ENCODE measurements at regions of chr15 and their contacts with region 1.

Region 1: DNA sequence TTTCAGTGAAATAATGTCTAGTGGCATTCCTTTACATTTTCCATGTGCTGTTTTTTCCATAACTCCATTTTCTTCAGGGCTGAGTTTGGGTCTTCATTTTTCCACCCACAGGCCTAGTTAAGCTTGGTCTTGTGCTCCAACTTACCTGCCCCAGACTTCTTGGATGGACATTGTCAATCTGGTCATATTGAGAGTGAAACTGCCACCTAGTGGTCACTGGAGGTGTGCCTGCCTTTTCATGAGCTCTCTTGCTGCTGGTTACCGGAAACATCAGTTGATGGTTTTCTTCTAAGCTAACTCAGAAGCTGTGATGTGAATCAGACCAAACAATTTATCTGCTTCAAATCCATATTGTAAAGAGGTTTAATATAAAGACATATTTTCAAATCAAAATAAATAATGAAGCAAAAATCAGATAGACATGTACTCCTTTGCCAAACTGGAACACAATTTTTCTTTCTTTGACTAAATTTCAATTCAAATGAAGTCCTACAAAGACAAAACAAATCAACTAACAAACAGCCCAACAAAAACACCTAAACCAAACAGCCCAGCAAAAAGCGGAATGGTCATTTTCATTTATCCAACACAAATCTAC is 135.1 kb upstream of the RASGRP1 start:
- DNase-seq: peak; percentile 87
- ATAC-seq: peak; percentile 34
- H3K4me3 Mint-ChIP-seq: peak overlapping the region; percentile 31
- H3K27ac Mint-ChIP-seq: peak overlapping the region; percentile 84
- H3K4me1 Mint-ChIP-seq: peaks cover 62% of the 10 kb centered on the region
- H3K27me3 Mint-ChIP-seq: no peaks in the 10 kb centered on the region

Region 2: DNA sequence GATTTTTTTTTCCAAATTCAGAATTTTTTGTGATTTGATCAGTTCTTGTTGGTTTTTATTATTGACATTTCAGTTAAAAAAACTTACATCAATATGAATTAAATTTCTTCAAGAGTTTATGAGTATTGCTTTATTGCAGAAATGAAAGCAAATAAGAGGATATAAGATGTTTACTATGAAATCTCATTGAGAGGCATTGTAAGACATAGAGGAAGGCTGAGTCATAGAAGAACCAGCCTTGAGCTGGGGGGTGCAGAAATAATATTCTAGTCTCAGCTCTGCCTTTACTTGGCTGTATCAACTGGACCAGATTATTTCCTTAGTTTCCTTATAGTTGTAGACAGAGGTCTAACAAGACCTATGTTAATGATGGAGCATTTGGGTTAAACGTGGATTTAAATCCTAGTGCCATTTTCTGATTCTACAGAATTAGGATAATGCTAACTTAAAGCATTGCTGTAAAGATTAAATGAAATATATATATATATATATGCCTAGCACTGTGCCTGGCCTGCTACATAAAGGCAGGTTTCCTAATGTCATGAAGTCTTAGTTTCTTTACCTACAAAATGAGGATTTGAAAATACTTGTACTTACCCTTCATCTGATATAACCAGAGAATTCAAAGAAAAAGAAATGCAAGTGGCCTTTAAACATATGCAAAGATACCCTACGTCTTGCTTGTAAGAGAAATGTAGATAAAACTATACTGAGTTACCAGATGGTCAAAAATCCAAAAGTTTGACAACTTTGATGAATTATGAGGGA is 238.5 kb before region 1 on chr15:
- CTCF ChIA-PET with region 1: interaction called, 14 read pairs
- POLR2A ChIA-PET with region 1: interaction called, 3 read pairs
- DNase-seq: no peak
- ATAC-seq: no peak
- H3K4me3 Mint-ChIP-seq: no peak overlapping the region
- H3K27ac Mint-ChIP-seq: no peak overlapping the region
- H3K4me1 Mint-ChIP-seq: peaks cover 26% of the 10 kb centered on the region
- H3K27me3 Mint-ChIP-seq: no peaks in the 10 kb centered on the region

Region 3: DNA sequence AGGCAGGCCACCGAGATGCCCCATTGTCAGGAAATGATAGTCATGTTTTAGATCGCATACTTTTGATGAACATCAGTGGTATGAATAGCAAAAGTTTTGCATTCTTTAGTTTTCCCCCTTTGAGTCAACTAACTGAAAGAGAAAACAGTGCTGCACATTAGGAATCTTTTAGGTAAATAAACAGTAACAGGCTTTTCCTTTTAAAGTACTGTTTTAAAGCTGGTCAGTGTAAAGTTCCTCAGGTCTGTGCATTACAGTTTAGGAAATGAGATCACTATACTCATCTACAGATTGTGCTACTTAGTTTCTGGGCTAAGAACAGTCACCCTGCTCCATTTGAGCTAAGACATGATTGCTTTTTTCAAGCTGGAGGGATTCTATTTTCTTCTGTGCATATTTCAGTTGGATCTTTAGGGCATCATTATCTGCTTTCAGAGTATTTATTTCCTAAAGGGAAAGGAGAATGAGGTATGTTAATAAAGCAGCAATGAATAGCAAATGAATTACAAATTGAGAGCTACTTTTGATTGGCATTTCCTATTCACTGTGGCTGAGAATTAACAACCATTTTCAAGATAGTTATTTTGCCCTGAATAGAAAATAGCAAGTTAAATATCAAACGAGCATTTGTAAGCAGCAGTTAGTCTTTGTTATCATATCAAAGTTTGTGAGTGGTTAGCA is 209.3 kb before region 1 on chr15:
- CTCF ChIA-PET with region 1: interaction called, 39 read pairs
- POLR2A ChIA-PET with region 1: no interaction called
- DNase-seq: no peak
- ATAC-seq: no peak
- H3K4me3 Mint-ChIP-seq: no peak overlapping the region
- H3K27ac Mint-ChIP-seq: peak overlapping the region; percentile 31
- H3K4me1 Mint-ChIP-seq: peaks cover 26% of the 10 kb centered on the region
- H3K27me3 Mint-ChIP-seq: no peaks in the 10 kb centered on the region

Region 4: DNA sequence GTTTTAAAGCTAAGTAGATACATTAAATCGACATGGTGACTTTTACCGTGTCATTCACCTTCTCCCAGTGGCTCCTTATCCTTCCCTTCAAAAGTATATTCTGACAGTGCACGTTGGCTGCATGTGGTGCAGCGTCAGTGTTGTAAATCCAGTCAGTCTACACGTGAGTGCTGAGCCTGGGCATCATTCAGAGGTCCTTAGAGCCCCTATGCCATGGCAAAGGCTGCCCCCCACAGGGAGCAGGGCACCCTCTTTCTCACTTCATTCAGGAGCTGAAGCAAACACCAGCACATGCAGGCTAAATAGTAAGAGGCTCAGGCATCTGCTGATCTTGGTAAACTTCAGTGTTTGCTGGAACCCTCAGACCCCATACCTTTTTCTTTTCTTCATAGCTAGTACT is 178.4 kb before region 1 on chr15:
- CTCF ChIA-PET with region 1: interaction called, 11 read pairs
- POLR2A ChIA-PET with region 1: no interaction called
- DNase-seq: no peak
- ATAC-seq: no peak
- H3K4me3 Mint-ChIP-seq: no peak overlapping the region
- H3K27ac Mint-ChIP-seq: peak overlapping the region; percentile 51
- H3K4me1 Mint-ChIP-seq: peaks cover 23% of the 10 kb centered on the region
- H3K27me3 Mint-ChIP-seq: no peaks in the 10 kb centered on the region

Region 5: DNA sequence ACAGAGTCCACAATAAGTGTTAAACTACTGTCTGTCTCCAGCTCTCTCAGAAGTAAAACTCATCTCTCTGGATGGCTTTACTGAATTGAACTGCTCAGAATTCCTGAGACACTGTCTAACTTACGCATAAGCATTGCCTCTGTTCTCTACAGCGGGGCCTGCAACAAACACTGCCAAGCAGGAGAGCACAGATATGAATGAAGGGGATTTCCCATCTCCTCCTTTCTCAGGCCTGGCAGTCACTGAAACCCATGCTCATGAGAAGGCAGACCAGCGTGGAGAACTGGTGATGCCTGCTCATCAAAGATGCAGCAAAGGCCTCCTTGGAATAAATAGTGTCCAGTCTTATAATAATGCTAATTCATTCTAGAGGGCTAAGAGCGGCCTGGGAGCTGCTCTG is 145.4 kb before region 1 on chr15:
- CTCF ChIA-PET with region 1: interaction called, 38 read pairs
- POLR2A ChIA-PET with region 1: interaction called, 10 read pairs
- DNase-seq: no peak
- ATAC-seq: peak; percentile 49
- H3K4me3 Mint-ChIP-seq: peak overlapping the region; percentile 4
- H3K27ac Mint-ChIP-seq: peak overlapping the region; percentile 44
- H3K4me1 Mint-ChIP-seq: peaks cover 83% of the 10 kb centered on the region
- H3K27me3 Mint-ChIP-seq: no peaks in the 10 kb centered on the region

Region 6: DNA sequence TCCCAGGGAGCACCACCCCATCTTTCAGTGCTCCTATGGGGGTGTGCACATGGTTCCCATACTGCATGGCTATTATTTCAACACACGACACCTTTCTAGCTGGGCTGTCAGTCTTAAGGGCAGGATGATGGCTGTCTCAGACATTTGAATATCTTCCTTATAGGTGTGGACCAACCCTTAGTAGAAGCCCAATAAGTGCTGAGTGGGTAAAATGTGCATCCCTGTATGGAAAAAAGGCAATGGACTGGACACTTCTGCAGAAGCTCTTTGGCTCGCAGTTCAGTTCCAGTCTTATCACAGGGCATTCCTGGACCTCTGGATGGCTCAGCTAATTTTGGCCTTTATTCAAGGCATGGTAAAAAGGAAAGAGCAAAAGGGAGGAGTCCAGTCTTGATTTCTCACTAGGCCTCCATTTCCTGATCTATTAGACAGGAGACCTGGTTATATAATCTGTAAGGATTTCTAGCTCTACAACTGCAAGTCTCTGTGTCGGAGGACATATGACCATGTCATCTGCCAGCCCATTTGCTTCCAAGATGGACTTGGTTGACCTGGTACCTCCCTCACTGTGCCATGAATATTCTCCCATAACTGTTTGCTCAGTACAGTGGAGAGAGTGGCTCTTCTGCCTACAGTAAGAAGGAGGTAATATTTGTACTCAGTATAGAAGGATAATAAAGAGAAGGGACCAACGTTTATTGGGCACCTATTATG is 81.3 kb before region 1 on chr15:
- CTCF ChIA-PET with region 1: no interaction called
- POLR2A ChIA-PET with region 1: no interaction called
- DNase-seq: no peak
- ATAC-seq: no peak
- H3K4me3 Mint-ChIP-seq: no peak overlapping the region
- H3K27ac Mint-ChIP-seq: no peak overlapping the region
- H3K4me1 Mint-ChIP-seq: peaks cover 18% of the 10 kb centered on the region
- H3K27me3 Mint-ChIP-seq: no peaks in the 10 kb centered on the region

Region 7: GRCh38 chr15:38647683-38648082 is 52.0 kb before region 1 on chr15:
- CTCF ChIA-PET with region 1: interaction called, 45 read pairs
- POLR2A ChIA-PET with region 1: interaction called, 20 read pairs
- DNase-seq: no peak
- ATAC-seq: no peak
- H3K4me3 Mint-ChIP-seq: no peak overlapping the region
- H3K27ac Mint-ChIP-seq: no peak overlapping the region
- H3K4me1 Mint-ChIP-seq: peaks cover 78% of the 10 kb centered on the region
- H3K27me3 Mint-ChIP-seq: no peaks in the 10 kb centered on the region

Region 8: DNA sequence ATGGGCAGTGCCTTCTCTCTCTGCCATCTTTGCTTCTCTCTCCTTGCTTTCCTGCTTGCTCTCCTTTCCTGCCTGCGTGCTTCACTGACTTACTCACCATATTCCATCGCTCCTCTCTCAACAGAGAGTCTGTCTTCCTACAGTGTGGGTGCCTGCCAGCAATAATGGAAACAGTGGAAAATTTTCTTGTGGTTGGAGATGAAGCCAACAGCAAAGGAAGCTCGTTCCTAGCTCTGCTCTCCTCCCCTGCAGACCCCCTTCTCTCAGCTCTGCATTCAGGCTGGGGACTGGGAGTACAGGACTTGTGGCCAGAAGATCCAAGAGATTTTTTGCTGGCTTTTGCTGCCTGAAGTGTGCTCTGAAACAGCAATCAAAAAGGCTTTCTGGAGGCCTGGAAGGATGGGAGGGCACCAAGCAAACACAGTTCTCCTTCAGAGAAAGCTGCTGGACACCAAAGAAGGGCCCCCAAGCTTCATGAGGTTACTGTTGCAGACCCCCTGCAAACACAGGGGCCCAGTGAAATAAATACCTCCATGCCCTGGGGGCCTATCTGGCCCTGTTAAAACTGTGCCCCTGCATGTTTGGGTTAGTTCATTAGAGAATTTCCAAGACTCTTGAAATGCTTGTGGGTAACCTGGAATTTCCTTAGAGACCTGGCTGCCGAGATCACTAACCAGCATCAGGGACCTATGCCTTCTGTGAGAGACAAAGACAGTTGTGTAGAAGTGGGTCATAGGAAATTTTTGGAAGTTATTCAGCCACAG is 14.8 kb after region 1 on chr15:
- CTCF ChIA-PET with region 1: interaction called, 15 read pairs
- POLR2A ChIA-PET with region 1: no interaction called
- DNase-seq: no peak
- ATAC-seq: no peak
- H3K4me3 Mint-ChIP-seq: no peak overlapping the region
- H3K27ac Mint-ChIP-seq: no peak overlapping the region
- H3K4me1 Mint-ChIP-seq: no peaks in the 10 kb centered on the region
- H3K27me3 Mint-ChIP-seq: peaks cover 9% of the 10 kb centered on the region

Region 9: GRCh38 chr15:39084683-39085530 is 385.2 kb after region 1 on chr15:
- CTCF ChIA-PET with region 1: no interaction called
- POLR2A ChIA-PET with region 1: no interaction called
- DNase-seq: peak; percentile 50
- ATAC-seq: no peak
- H3K4me3 Mint-ChIP-seq: no peak overlapping the region
- H3K27ac Mint-ChIP-seq: no peak overlapping the region
- H3K4me1 Mint-ChIP-seq: peaks cover 8% of the 10 kb centered on the region
- H3K27me3 Mint-ChIP-seq: peaks cover 21% of the 10 kb centered on the region